ENCODE measurements at regions of chr17 and their contacts with region 1.

Region 1: GRCh38 chr17:62808196-62808930 is at the start of gene MARCHF10:
- DNase-seq: no peak
- ATAC-seq: no peak
- H3K4me3 ChIP-seq: no peak within 1 kb of the TSS
- H3K27ac ChIP-seq: no peak within 1 kb of the TSS
- H3K4me1 ChIP-seq: no peaks in the 10 kb centered on the region
- H3K27me3 ChIP-seq: peaks cover 7 to 18% (median 13%) of the 10 kb centered on the region in 3 donors
- CTCF ChIP-seq: no peak
- POLR2A ChIP-seq: no peak
- total RNA-seq, gene MARCHF10: not detected

Region 2: DNA sequence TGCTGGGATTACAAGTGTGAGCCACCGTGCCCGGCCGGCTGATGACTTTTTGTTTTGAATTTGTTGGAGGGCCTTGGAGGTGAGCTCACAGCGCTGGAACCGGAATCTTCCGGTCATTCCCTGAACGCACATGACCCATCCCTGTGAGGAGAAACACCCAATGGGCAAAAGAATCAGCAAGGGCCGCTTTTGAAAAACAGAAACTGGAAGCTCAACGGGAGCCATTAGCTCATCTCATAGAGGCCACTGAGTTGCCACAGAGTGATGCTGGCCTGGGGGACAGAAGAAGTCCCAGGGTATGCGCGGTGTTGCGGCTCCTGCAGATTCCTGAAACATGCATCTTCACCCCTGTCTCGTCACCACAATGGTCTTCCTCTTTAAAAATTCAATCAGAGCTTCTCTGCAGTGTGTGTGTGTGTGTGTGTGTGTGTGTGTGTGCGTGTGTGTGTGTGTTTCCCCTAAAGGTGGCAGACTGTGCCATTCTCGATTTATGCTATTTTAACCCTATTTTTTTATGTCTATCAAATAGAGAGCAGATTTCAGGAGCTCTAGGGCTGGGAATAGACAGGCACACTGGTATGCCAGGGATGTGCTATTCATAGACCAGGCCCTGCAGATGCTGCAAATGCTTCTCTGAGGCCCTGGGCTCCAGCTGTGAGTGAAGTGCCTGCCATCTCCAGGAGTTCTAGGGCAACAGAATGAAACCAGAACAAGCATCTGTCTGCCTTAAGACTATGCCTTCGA is 68.5 kb before region 1 on chr17:
- in situ Hi-C with region 1: loop called in 1 of 4 experiments (anchors 10 kb)
- intact Hi-C with region 1: no loop called
- DNase-seq: no peak
- ATAC-seq: no peak
- H3K4me3 ChIP-seq: no peak overlapping the region
- H3K27ac ChIP-seq: no peak overlapping the region
- H3K4me1 ChIP-seq: no peaks in the 10 kb centered on the region
- H3K27me3 ChIP-seq: no peaks in the 10 kb centered on the region
- CTCF ChIP-seq: no peak
- POLR2A ChIP-seq: no peak

Measured in gastrocnemius medialis (tissue), 4 donors.